ENCODE measurements at regions of chr17 and their contacts with region 1.

Region 1: GRCh38 chr17:9644910-9645751 is at the start of gene USP43:
- DNase-seq: no peak
- ATAC-seq: peak; percentile 81
- H3K4me3 ChIP-seq: peak within 1 kb of the TSS; percentile 60 to 69
- H3K27ac ChIP-seq: peak within 1 kb of the TSS; percentile 88
- H3K4me1 ChIP-seq: peaks cover 12% of the 10 kb centered on the region; the same call in 1 of the 2 replicates
- H3K27me3 ChIP-seq: no peaks in the 10 kb centered on the region
- CTCF ChIP-seq: peak; percentile 33
- total RNA-seq, gene USP43: 7.3 TPM

Region 2: GRCh38 chr17:9044772-9045470 is 600.2 kb before region 1 on chr17:
- CTCF ChIA-PET with region 1: interaction called, 18 read pairs
- POLR2A ChIA-PET with region 1: no interaction called
- in situ Hi-C with region 1: no loop called
- intact Hi-C with region 1: no loop called
- DNase-seq: no peak
- ATAC-seq: no peak
- H3K4me3 ChIP-seq: no peak overlapping the region
- H3K27ac ChIP-seq: no peak overlapping the region
- H3K4me1 ChIP-seq: no peaks in the 10 kb centered on the region
- H3K27me3 ChIP-seq: no peaks in the 10 kb centered on the region
- CTCF ChIP-seq: no peak

Region 3: GRCh38 chr17:9575381-9576101 is 69.6 kb before region 1 on chr17 and contains the start of gene STX8:
- CTCF ChIA-PET with region 1: interaction called, 3 read pairs
- POLR2A ChIA-PET with region 1: interaction called, 8 read pairs
- in situ Hi-C with region 1: no loop called
- intact Hi-C with region 1: loop called (anchors 2 kb)
- DNase-seq: no peak
- ATAC-seq: peak; percentile 89
- H3K4me3 ChIP-seq: peak within 1 kb of the TSS; percentile 89 to 94
- H3K27ac ChIP-seq: peak within 1 kb of the TSS; percentile 79
- H3K4me1 ChIP-seq: no peaks in the 10 kb centered on the region
- H3K27me3 ChIP-seq: no peaks in the 10 kb centered on the region
- CTCF ChIP-seq: no peak
- total RNA-seq, gene STX8: 50.3 TPM

Region 4: GRCh38 chr17:9935408-9935807 is 290.3 kb after region 1 on chr17:
- CTCF ChIA-PET with region 1: no interaction called
- POLR2A ChIA-PET with region 1: interaction called, 11 read pairs
- in situ Hi-C with region 1: no loop called
- intact Hi-C with region 1: no loop called
- DNase-seq: no peak
- ATAC-seq: no peak
- H3K4me3 ChIP-seq: no peak overlapping the region
- H3K27ac ChIP-seq: no peak overlapping the region
- H3K4me1 ChIP-seq: no peaks in the 10 kb centered on the region
- H3K27me3 ChIP-seq: peaks cover 4% of the 10 kb centered on the region
- CTCF ChIP-seq: no peak